ENCODE measurements at regions of chr4 and their contacts with region 1.

Region 1: GRCh38 chr4:40056716-40057585 is at the start of gene N4BP2:
- DNase-seq: peak; percentile 34 to 79 (median 60)
- H3K4me3 ChIP-seq: peak within 1 kb of the TSS; percentile 58 to 94 (median 84)
- H3K27ac ChIP-seq: peak within 1 kb of the TSS; percentile 55 to 100 (median 97)
- H3K27me3 ChIP-seq: no peaks in the 10 kb centered on the region
- CTCF ChIP-seq: peak; percentile 29 to 95 (median 75)
- total RNA-seq, gene N4BP2: 3.7 to 18.5 (median 9.2) TPM

Region 2: DNA sequence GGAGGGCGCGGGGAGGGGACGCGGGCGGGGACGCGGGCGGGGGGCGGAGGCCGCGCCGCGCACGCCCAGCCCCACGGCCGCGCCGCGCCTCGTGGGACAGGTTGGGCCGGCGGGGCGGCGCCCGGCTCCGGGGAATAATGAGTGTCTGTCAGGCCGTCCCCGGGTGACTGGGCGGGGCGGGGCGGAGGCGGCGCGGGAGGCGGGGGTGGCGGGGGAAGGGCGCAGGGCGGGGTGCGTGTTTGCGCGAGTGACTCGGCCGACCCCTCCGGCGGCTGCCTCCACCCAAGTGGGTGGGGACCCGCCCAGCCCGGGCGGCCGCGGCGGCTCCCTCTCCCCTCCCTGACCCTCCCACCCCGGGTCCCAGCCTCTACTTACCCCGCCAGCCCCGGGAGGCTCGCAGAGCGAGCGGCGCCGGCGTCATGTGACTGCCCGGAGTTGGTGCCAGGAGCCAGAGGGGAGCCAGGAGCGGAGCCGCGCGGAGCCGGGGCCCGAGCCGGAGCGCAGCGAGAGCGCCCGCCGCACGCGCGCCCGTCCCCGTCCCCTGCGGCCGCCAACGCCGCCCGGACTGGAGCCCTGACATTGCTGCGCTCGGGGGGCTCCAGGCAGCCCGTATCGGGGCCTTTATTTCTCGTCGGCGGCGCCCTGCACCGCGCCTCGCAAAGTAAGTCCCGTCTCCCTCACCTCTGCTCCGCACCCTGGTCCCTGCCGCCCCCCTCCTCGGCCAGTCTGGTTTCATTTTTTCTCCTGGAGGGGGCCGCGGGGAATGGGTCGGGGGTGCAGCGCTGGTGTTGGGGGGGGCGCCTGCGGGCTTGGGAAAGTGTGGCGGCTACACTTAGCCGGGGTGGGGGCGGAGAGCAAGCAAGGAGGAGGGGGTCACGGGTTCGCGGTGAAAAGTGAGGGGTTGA is 1392.9 kb before region 1 on chr4 and contains the start of gene KLF3:
- intact Hi-C with region 1: loop called in 1 of 2 experiments (anchors 10 kb)
- DNase-seq: peak; percentile 79 to 92 (median 88)
- H3K4me3 ChIP-seq: peak within 1 kb of the TSS; percentile 72 to 96 (median 85)
- H3K27ac ChIP-seq: peak within 1 kb of the TSS; percentile 93 to 100 (median 99)
- H3K27me3 ChIP-seq: no peaks in the 10 kb centered on the region
- CTCF ChIP-seq: peak in 6 of 56 donors; percentile 2 to 14 (median 10)
- total RNA-seq, gene KLF3: 20.0 to 55.9 (median 31.2) TPM

Region 3: GRCh38 chr4:39469429-39470077 is 587.4 kb before region 1 on chr4:
- intact Hi-C with region 1: loop called in 1 of 2 experiments (anchors 10 kb)
- DNase-seq: peak in 4 of 10 donors; percentile 15 to 40 (median 24)
- H3K4me3 ChIP-seq: peak overlapping the region in 10 of 59 donors; percentile 1 to 28 (median 6)
- H3K27ac ChIP-seq: peak overlapping the region; percentile 17 to 99 (median 84)
- H3K27me3 ChIP-seq: no peaks in the 10 kb centered on the region
- CTCF ChIP-seq: peak; percentile 81 to 97 (median 92)

Region 4: GRCh38 chr4:39638354-39639240 is 418.4 kb before region 1 on chr4 and contains the start of gene SMIM14:
- intact Hi-C with region 1: loop called in 1 of 2 experiments (anchors 2 kb)
- DNase-seq: peak; percentile 97 to 100 (median 98)
- H3K4me3 ChIP-seq: peak within 1 kb of the TSS; percentile 69 to 98 (median 91)
- H3K27ac ChIP-seq: peak within 1 kb of the TSS; percentile 87 to 100 (median 99)
- H3K27me3 ChIP-seq: no peaks in the 10 kb centered on the region
- CTCF ChIP-seq: peak in 46 of 56 donors; percentile 6 to 67 (median 38)
- total RNA-seq, gene SMIM14: 22.3 to 73.2 (median 50.5) TPM

Region 5: GRCh38 chr4:39697740-39698423 is 359.1 kb before region 1 on chr4 and contains the start of gene UBE2K:
- intact Hi-C with region 1: loop called (anchors 5 kb)
- DNase-seq: peak; percentile 57 to 92 (median 78)
- H3K4me3 ChIP-seq: peak within 1 kb of the TSS; percentile 66 to 98 (median 89)
- H3K27ac ChIP-seq: peak within 1 kb of the TSS; percentile 78 to 99 (median 94)
- H3K27me3 ChIP-seq: no peaks in the 10 kb centered on the region
- CTCF ChIP-seq: peak in 43 of 56 donors; percentile 10 to 68 (median 43)
- total RNA-seq, gene UBE2K: 44.7 to 140 (median 90.1) TPM

Region 6: GRCh38 chr4:39908284-39908683 is 148.7 kb before region 1 on chr4:
- intact Hi-C with region 1: no loop called
- DNase-seq: no peak
- H3K4me3 ChIP-seq: no peak overlapping the region
- H3K27ac ChIP-seq: no peak overlapping the region
- H3K27me3 ChIP-seq: no peaks in the 10 kb centered on the region
- CTCF ChIP-seq: no peak

Region 7: GRCh38 chr4:39977489-39978377 is 79.2 kb before region 1 on chr4 and contains the start of gene PDS5A:
- intact Hi-C with region 1: loop called (anchors 2 to 5 kb)
- DNase-seq: peak; percentile 67 to 89 (median 81)
- H3K4me3 ChIP-seq: peak within 1 kb of the TSS; percentile 62 to 98 (median 93)
- H3K27ac ChIP-seq: peak within 1 kb of the TSS; percentile 84 to 98 (median 95)
- H3K27me3 ChIP-seq: no peaks in the 10 kb centered on the region
- CTCF ChIP-seq: peak; percentile 54 to 93 (median 80)
- total RNA-seq, gene PDS5A: 43.7 to 92.5 (median 61.9) TPM

Region 8: GRCh38 chr4:40309250-40309774 is 252.4 kb after region 1 on chr4:
- intact Hi-C with region 1: loop called (anchors 2 kb)
- DNase-seq: peak; percentile 76 to 95 (median 86)
- H3K4me3 ChIP-seq: peak overlapping the region in 18 of 59 donors; percentile 2 to 35 (median 22)
- H3K27ac ChIP-seq: no peak overlapping the region
- H3K27me3 ChIP-seq: peaks cover 0 to 9% (median 0%) of the 10 kb centered on the region in 45 donors
- CTCF ChIP-seq: peak; percentile 64 to 93 (median 88)